Psoas muscle (tissue), 8 donors: ENCODE measurements at regions of chr12 and their contacts with region 1.

Region 1: DNA sequence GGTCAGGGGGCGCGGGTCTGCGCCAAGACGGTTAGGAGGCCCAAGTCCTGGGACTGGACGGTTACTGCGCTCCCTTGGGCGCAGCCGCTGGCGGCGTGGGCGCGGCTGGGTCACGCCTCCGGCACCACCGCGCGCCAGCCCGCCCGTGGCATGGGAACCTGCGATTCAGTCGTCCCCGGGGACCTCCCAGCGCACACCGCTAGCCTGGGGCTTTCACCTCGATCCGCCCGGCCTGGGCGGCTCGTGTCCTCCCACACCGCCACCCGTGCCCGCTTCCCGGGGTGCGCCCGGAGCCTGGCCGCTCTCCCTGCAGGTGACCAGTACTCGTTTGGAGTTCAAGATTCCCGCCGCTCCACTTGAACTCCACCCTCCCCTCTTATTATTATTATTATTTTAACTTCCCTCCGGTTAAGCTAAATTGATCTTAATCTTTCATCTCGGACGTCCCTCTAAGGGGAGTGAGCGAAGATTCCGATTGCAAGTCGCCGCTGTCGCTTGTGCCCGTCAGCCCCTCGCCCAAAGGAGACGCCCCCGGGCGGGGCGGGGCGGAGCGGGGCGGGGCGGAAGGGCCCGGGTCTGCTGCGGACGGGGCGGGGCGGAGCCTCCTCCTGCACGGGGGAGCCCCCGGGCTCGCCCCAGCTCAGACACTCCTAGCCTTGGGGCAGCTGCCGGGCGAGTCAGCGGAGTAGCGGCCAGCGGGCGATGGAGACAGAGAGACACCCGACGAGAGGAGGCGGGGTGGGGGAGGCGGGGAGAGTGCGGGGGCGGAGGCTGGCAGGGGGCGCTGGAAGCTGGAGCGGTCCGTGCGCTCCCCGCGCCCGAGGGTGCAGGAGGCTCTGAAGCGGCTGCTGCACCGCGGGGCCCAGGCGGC is at the start of gene KCNMB4:
- DNase-seq: peak; percentile 73 to 81
- ATAC-seq: peak; percentile 60 to 82 (median 76)
- H3K4me3 ChIP-seq: peak within 1 kb of the TSS; percentile 76
- H3K27ac ChIP-seq: no peak within 1 kb of the TSS
- H3K4me1 ChIP-seq: peaks cover 8% of the 10 kb centered on the region
- H3K27me3 ChIP-seq: peaks cover 0 to 50% (median 0%) of the 10 kb centered on the region in 3 donors
- CTCF ChIP-seq: no peak
- total RNA-seq, gene KCNMB4: 0.54 to 1.9 (median 0.62) TPM

Region 2: GRCh38 chr12:70242695-70243509 is 123.0 kb before region 1 on chr12 and contains the start of gene CNOT2:
- intact Hi-C with region 1: loop called in 1 of 2 experiments (anchors 5 kb)
- DNase-seq: peak; percentile 91 to 95
- ATAC-seq: peak; percentile 96 to 97 (median 97)
- H3K4me3 ChIP-seq: peak within 1 kb of the TSS; percentile 92
- H3K27ac ChIP-seq: peak within 1 kb of the TSS; percentile 98
- H3K4me1 ChIP-seq: peaks cover 46% of the 10 kb centered on the region
- H3K27me3 ChIP-seq: no peaks in the 10 kb centered on the region
- CTCF ChIP-seq: no peak
- total RNA-seq, gene CNOT2: 28.5 to 46.3 (median 38.1) TPM